ENCODE measurements at regions of chr11 and their contacts with region 1.

Region 1: GRCh38 chr11:73965076-73965860 is 14.4 kb downstream of the DNAJB13 start:
- DNase-seq: no peak
- ATAC-seq: no peak
- H3K4me3 Mint-ChIP-seq: no peak overlapping the region
- H3K27ac Mint-ChIP-seq: no peak overlapping the region
- H3K4me1 Mint-ChIP-seq: peaks cover 38% of the 10 kb centered on the region
- H3K27me3 Mint-ChIP-seq: no peaks in the 10 kb centered on the region
- CTCF ChIP-seq: no peak

Region 2: DNA sequence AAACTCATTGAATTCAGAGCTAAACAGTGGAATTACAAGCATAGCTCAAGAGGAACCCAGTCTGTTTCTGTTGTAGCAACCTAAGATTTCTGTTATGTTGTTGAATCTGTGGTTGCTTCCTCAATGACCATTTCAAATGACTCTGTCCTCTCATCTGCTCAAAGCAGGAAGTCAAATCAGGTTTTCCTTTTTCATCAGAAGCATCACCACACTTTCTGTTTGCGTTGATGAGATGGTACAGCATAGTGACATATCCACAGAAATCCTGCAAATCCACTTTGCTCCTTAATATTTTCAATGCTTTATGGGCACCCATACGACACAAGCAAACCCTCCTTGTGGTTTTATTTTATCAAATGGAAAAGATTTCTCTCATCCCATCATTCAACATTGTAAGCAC is 30.0 kb after region 1 on chr11:
- CTCF ChIA-PET with region 1: interaction called, 4 read pairs
- POLR2A ChIA-PET with region 1: interaction called, 425 read pairs
- intact Hi-C with region 1: loop called (anchors 1 kb)
- DNase-seq: no peak
- ATAC-seq: peak; percentile 45
- H3K4me3 Mint-ChIP-seq: peak overlapping the region; percentile 36
- H3K27ac Mint-ChIP-seq: peak overlapping the region; percentile 92
- H3K4me1 Mint-ChIP-seq: peaks cover 96% of the 10 kb centered on the region
- H3K27me3 Mint-ChIP-seq: no peaks in the 10 kb centered on the region
- CTCF ChIP-seq: no peak

Region 3: DNA sequence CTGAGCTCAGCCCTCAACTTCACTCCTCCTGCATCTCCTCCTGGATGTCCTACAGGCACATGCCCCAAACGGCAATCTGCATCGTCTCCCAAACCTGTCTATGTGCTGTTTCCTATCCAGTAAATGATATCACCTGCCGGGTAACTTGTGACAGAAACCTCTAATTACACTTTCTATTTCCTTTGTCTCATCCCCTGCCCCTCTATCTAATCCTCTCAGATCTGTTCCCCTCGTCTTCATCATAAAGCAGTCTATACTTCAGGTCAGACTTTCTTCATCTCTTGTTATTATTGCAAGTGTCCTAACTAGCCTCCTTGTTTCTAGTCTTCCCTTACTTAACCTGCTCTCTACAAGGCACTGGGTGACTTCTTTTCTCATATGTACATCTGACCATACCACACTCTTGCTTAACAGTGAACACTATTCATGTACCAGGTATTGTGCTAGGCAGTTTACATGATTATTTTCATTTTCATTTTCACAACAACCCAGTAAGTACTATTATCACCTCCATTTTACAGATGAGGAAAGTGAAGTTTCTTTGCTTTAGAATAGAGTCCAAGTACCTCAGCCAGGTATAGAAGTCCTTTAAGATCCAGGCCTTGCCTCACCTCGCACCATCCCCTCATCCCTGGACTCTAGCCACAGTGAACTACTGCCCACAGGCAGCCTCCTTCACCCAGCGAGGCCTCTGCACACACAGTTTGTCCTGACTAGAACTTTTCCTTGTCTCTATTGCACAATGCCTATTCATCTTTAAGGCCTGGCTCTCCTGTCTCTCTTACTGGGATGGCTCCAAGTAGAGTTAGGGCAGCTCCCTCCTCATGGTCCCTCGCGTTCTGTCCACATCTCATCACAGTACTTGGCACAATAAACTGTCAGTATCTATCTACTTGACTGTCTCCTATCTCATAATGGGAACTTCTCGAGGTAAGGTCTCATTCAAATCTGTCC is 65.7 kb after region 1 on chr11:
- CTCF ChIA-PET with region 1: interaction called, 16 read pairs
- POLR2A ChIA-PET with region 1: interaction called, 3 read pairs
- intact Hi-C with region 1: loop called (anchors 1 kb)
- DNase-seq: no peak
- ATAC-seq: no peak
- H3K4me3 Mint-ChIP-seq: no peak overlapping the region
- H3K27ac Mint-ChIP-seq: no peak overlapping the region
- H3K4me1 Mint-ChIP-seq: peaks cover 8% of the 10 kb centered on the region
- H3K27me3 Mint-ChIP-seq: no peaks in the 10 kb centered on the region
- CTCF ChIP-seq: no peak

Region 4: GRCh38 chr11:74090701-74091100 is 125.4 kb after region 1 on chr11:
- CTCF ChIA-PET with region 1: no interaction called
- POLR2A ChIA-PET with region 1: no interaction called
- intact Hi-C with region 1: loop called (anchors 1 kb)
- DNase-seq: no peak
- ATAC-seq: no peak
- H3K4me3 Mint-ChIP-seq: no peak overlapping the region
- H3K27ac Mint-ChIP-seq: no peak overlapping the region
- H3K4me1 Mint-ChIP-seq: no peaks in the 10 kb centered on the region
- H3K27me3 Mint-ChIP-seq: no peaks in the 10 kb centered on the region
- CTCF ChIP-seq: no peak

Region 5: GRCh38 chr11:74170694-74171629 is 205.7 kb after region 1 on chr11 and contains the starts of genes C2CD3 and PPME1:
- CTCF ChIA-PET with region 1: interaction called, 4 read pairs
- POLR2A ChIA-PET with region 1: interaction called, 6 read pairs
- intact Hi-C with region 1: loop called (anchors 1 kb)
- DNase-seq: peak; percentile 94
- ATAC-seq: peak; percentile 93
- H3K4me3 Mint-ChIP-seq: no peak within 1 kb of the TSS
- H3K27ac Mint-ChIP-seq: no peak within 1 kb of the TSS
- H3K4me1 Mint-ChIP-seq: peaks cover 12% of the 10 kb centered on the region
- H3K27me3 Mint-ChIP-seq: no peaks in the 10 kb centered on the region
- CTCF ChIP-seq: no peak
- total RNA-seq, gene C2CD3: 36.2 and 50.3 TPM in 2 replicates
- total RNA-seq, gene PPME1: 12.4 and 17.3 TPM in 2 replicates

Region 6: GRCh38 chr11:74255741-74256369 is 290.6 kb after region 1 on chr11:
- CTCF ChIA-PET with region 1: interaction called, 3 read pairs
- POLR2A ChIA-PET with region 1: no interaction called
- intact Hi-C with region 1: loop called (anchors 1 kb)
- DNase-seq: no peak
- ATAC-seq: peak; percentile 75
- H3K4me3 Mint-ChIP-seq: no peak overlapping the region
- H3K27ac Mint-ChIP-seq: no peak overlapping the region
- H3K4me1 Mint-ChIP-seq: no peaks in the 10 kb centered on the region
- H3K27me3 Mint-ChIP-seq: no peaks in the 10 kb centered on the region
- CTCF ChIP-seq: peak; percentile 62

Measured in activated B cell treated with CpG ODN at 0.5 μM for 24 hours (primary cell).